Tibial artery (tissue), 4 donors: ENCODE measurements at regions of chr11 and their contacts with region 1.

Region 1: GRCh38 chr11:18457431-18457830 is 1.8 kb downstream of the LDHAL6A start:
- DNase-seq: no peak
- H3K4me3 ChIP-seq: no peak overlapping the region
- H3K27ac ChIP-seq: no peak overlapping the region
- H3K4me1 ChIP-seq: no peaks in the 10 kb centered on the region
- H3K27me3 ChIP-seq: peaks cover 0 to 9% of the 10 kb centered on the region in 2 donors
- CTCF ChIP-seq: no peak

Region 2: GRCh38 chr11:20289732-20290131 is 1832.3 kb after region 1 on chr11:
- intact Hi-C with region 1: loop called (anchors 10 kb)
- DNase-seq: no peak
- H3K4me3 ChIP-seq: no peak overlapping the region
- H3K27ac ChIP-seq: no peak overlapping the region
- H3K4me1 ChIP-seq: no peaks in the 10 kb centered on the region
- H3K27me3 ChIP-seq: no peaks in the 10 kb centered on the region
- CTCF ChIP-seq: no peak